CD14-positive monocyte (primary cell): ENCODE measurements at regions of chr6 and their contacts with region 1.

Region 1: GRCh38 chr6:142946181-142946923 is 1.4 kb upstream of the HIVEP2 start:
- DNase-seq: peak; percentile 81 to 96 (median 94)
- H3K4me3 ChIP-seq: peak overlapping the region; percentile 81 to 95 (median 89)
- H3K4me3 Mint-ChIP-seq: peak overlapping the region; percentile 92
- H3K27ac ChIP-seq: peak overlapping the region; percentile 98
- H3K27ac Mint-ChIP-seq: peak overlapping the region; percentile 93 to 97 (median 95)
- H3K4me1 ChIP-seq: peaks cover 30 to 37% of the 10 kb centered on the region in 2 donors
- H3K4me1 Mint-ChIP-seq: peaks cover 34% of the 10 kb centered on the region
- H3K27me3 ChIP-seq: no peaks in the 10 kb centered on the region
- H3K27me3 Mint-ChIP-seq: peaks cover 4 to 10% (median 8%) of the 10 kb centered on the region in 3 donors
- CTCF ChIP-seq: no peak

Region 2: DNA sequence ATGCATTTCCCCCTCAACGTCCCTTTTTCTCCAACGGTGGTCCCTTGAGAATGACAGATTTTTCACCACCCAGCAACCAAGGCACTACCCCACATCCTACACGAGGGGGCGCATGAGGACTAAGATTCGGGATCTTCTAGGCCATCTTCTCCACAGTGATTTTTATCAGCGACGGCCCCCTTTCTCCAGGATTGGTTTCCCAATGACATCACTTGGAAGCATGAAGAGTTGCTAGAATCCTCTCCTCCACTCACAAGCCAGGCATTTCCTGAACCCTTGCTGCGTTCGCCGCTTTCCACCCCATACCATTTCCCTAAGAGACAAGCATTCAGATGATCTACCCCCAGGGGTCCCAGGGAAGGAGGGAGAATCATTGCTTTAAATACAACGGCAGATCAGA is 253.4 kb before region 1 on chr6:
- intact Hi-C with region 1: loop called in 1 of 2 experiments (anchors 10 kb)
- DNase-seq: peak; percentile 41 to 59 (median 51)
- H3K4me3 ChIP-seq: no peak overlapping the region
- H3K4me3 Mint-ChIP-seq: no peak overlapping the region
- H3K27ac ChIP-seq: no peak overlapping the region
- H3K27ac Mint-ChIP-seq: peak overlapping the region in 2 of 7 donors; percentile 6 to 37
- H3K4me1 ChIP-seq: peaks cover 11 to 13% of the 10 kb centered on the region in 2 donors
- H3K4me1 Mint-ChIP-seq: peaks cover 19% of the 10 kb centered on the region
- H3K27me3 ChIP-seq: no peaks in the 10 kb centered on the region
- H3K27me3 Mint-ChIP-seq: peaks cover 0 to 1% (median under 1%) of the 10 kb centered on the region in 3 donors
- CTCF ChIP-seq: peak; percentile 97

Region 3: GRCh38 chr6:142702501-142703460 is 243.6 kb before region 1 on chr6:
- intact Hi-C with region 1: loop called (anchors 5 to 10 kb)
- DNase-seq: peak; percentile 83 to 94 (median 89)
- H3K4me3 ChIP-seq: peak overlapping the region in 1 of 3 experiments; percentile 47
- H3K4me3 Mint-ChIP-seq: peak overlapping the region; percentile 34 to 82
- H3K27ac ChIP-seq: peak overlapping the region; percentile 56 to 57
- H3K27ac Mint-ChIP-seq: peak overlapping the region; percentile 87 to 95 (median 90)
- H3K4me1 ChIP-seq: peaks cover 85 to 94% of the 10 kb centered on the region in 2 donors
- H3K4me1 Mint-ChIP-seq: peaks cover 85% of the 10 kb centered on the region
- H3K27me3 ChIP-seq: no peaks in the 10 kb centered on the region
- H3K27me3 Mint-ChIP-seq: peaks cover 0 to 9% (median 3%) of the 10 kb centered on the region in 3 donors
- CTCF ChIP-seq: no peak

Region 4: GRCh38 chr6:142913511-142914047 is 32.8 kb before region 1 on chr6:
- intact Hi-C with region 1: loop called (anchors 5 kb)
- DNase-seq: peak; percentile 91 to 99 (median 92)
- H3K4me3 ChIP-seq: peak overlapping the region; percentile 32 to 87 (median 74)
- H3K4me3 Mint-ChIP-seq: peak overlapping the region; percentile 82 to 93
- H3K27ac ChIP-seq: peak overlapping the region; percentile 65 to 97
- H3K27ac Mint-ChIP-seq: peak overlapping the region; percentile 97 to 100 (median 99)
- H3K4me1 ChIP-seq: peaks cover 22 to 27% of the 10 kb centered on the region in 2 donors
- H3K4me1 Mint-ChIP-seq: peaks cover 30% of the 10 kb centered on the region
- H3K27me3 ChIP-seq: no peaks in the 10 kb centered on the region
- H3K27me3 Mint-ChIP-seq: peaks cover 0 to 1% (median 0%) of the 10 kb centered on the region in 3 donors
- CTCF ChIP-seq: peak; percentile 46

Region 5: DNA sequence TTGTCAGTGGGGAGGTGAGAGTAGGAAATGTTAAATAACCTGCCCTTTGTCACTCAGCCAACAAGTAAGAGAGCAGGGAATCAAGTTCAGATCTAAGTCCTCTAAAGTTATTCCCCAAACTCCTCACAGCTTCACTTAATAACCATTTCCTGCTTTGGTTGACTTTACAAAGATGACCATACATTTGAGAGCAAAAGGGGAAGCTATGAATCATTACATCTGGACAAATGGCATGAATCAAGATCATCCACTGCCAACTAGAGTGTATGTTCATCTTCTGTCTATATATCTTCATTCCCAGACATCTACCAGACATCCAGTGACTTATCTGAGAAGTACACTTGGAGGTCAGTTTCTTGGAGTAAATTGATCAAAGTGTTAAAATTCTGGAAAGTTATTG is 13.7 kb after region 1 on chr6:
- intact Hi-C with region 1: no loop called
- DNase-seq: peak; percentile 64 to 84 (median 78)
- H3K4me3 ChIP-seq: no peak overlapping the region
- H3K4me3 Mint-ChIP-seq: peak overlapping the region in 1 of 2 donors; percentile 46
- H3K27ac ChIP-seq: peak overlapping the region in 1 of 2 donors; percentile 3
- H3K27ac Mint-ChIP-seq: peak overlapping the region; percentile 2 to 70 (median 50)
- H3K4me1 ChIP-seq: peaks cover 8 to 9% of the 10 kb centered on the region in 2 donors
- H3K4me1 Mint-ChIP-seq: peaks cover 14% of the 10 kb centered on the region
- H3K27me3 ChIP-seq: no peaks in the 10 kb centered on the region
- H3K27me3 Mint-ChIP-seq: peaks cover 0 to 1% (median 0%) of the 10 kb centered on the region in 3 donors
- CTCF ChIP-seq: no peak

Region 6: DNA sequence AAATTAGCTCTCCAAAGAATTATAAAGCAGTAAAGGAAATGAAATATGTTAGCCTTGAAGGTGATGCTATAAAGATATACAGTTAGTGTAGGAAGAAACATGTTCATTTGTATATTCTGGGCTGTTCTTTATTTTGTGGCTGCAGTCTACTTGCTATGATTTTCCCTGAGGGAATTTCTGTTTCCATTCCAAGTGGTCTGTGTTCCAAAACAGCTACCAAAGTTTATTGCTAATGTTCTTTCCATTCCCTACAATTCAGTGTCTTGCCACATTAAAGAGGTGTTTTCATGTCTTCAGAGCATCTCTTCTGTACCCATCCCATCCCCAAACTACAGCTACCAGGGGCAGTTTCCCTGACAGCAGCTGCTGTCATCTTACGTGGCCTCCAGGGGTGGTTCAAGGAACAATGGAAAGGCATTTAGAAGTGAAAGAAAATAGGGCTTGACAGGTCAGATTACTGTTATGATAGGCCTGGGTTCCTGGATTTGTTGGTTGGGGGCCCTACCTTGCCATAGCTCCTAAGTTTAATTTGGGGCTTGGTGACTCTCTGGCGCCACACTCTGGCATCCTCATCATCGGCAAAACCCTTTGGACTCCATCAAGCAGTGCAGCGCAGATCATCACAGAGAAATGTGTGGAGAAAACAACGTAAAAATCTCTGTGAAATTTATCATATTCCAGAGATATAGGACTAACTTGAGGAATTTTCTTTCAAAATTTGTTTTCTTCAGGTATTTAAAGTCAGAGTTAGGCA is 80.5 kb after region 1 on chr6:
- intact Hi-C with region 1: loop called in 1 of 2 experiments (anchors 5 kb)
- DNase-seq: peak; percentile 22 to 47 (median 32)
- H3K4me3 ChIP-seq: no peak overlapping the region
- H3K4me3 Mint-ChIP-seq: no peak overlapping the region
- H3K27ac ChIP-seq: no peak overlapping the region
- H3K27ac Mint-ChIP-seq: no peak overlapping the region
- H3K4me1 ChIP-seq: no peaks in the 10 kb centered on the region
- H3K4me1 Mint-ChIP-seq: no peaks in the 10 kb centered on the region
- H3K27me3 ChIP-seq: no peaks in the 10 kb centered on the region
- H3K27me3 Mint-ChIP-seq: no peaks in the 10 kb centered on the region
- CTCF ChIP-seq: peak; percentile 81

Region 7: DNA sequence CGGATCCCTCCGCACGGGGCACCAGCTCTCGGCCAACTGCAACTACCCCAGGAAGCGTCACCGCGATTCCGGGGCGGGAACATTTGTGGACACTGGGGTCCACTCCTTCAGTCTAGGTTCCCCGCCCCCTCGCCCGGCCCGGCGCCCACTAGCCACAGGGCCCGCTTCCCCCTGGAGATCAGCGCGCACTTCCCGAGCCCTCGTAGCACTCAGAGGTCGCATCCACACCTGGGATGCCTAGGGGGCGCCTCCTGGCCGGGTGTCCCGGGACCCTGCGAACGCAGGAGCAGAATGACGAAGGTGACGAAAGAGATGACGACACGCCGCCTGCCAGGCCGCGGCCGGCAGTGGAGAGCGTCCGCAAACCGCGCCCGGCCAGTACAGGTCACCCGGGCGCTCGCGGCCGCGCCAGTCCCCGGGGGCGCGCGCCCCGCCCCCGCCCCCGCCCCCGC is 114.0 kb after region 1 on chr6:
- intact Hi-C with region 1: loop called in 1 of 2 experiments (anchors 10 kb)
- DNase-seq: peak; percentile 90 to 93 (median 93)
- H3K4me3 ChIP-seq: peak overlapping the region; percentile 76 to 93 (median 91)
- H3K4me3 Mint-ChIP-seq: peak overlapping the region; percentile 90 to 96
- H3K27ac ChIP-seq: peak overlapping the region; percentile 83 to 88
- H3K27ac Mint-ChIP-seq: peak overlapping the region; percentile 93 to 99 (median 97)
- H3K4me1 ChIP-seq: peaks cover 15 to 19% of the 10 kb centered on the region in 2 donors
- H3K4me1 Mint-ChIP-seq: peaks cover 16% of the 10 kb centered on the region
- H3K27me3 ChIP-seq: no peaks in the 10 kb centered on the region
- H3K27me3 Mint-ChIP-seq: peaks cover 0 to 2% (median 0%) of the 10 kb centered on the region in 3 donors
- CTCF ChIP-seq: peak; percentile 14